ENCODE measurements at regions of chr1 and their contacts with region 1.

Region 1: DNA sequence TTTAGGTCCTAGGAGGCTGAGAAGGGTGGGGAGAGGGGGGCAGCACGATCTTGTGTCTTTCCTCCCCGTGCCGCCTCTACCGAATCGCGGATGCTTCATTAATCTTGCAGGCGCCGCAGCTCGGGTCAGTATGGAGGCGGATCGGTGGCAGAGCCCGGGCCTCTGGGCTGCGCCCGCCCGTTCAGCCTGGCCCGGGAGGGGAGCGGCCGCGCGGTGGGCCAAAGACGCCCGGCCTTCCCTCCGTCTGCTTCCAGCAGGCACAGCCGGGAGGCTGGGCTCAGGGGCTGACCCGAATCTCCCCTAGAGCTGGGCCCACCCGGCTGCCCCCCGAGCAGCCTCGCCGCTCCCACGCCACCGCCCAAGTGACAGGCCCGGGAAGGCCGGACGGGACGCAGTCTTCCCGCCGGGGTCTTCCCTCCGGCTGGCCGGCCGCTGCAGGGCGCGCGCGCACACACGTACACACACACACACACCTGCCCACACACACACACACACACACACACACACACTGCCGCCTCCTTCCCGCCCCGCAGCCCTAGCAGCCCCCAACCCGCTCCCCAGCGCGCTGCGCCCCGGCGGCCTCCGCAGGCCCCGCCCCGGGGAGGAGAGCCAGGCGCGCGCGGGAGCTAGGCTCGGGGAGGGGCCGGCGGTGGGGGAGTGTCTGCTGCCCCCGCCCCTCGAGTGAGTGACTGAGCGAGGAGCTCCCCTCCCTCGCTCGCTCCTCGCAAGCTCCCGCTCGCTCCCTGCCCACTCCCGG is at the start of gene C1orf21:
- DNase-seq: peak; percentile 91 to 92
- H3K4me3 ChIP-seq: peak within 1 kb of the TSS; percentile 75 to 92
- H3K27ac ChIP-seq: peak within 1 kb of the TSS; percentile 88 to 92
- H3K4me1 ChIP-seq: peaks cover 0 to 6% of the 10 kb centered on the region in 2 donors
- H3K27me3 ChIP-seq: no peaks in the 10 kb centered on the region
- CTCF ChIP-seq: no peak
- POLR2A ChIP-seq: peak in 1 of 2 donors; percentile 94
- total RNA-seq, gene C1orf21: 15.0 to 71.0 (median 44.5) TPM

Region 2: GRCh38 chr1:184483101-184483683 is 96.7 kb after region 1 on chr1:
- intact Hi-C with region 1: no loop called
- DNase-seq: peak; percentile 78
- H3K4me3 ChIP-seq: no peak overlapping the region
- H3K27ac ChIP-seq: peak overlapping the region; percentile 80 to 88
- H3K4me1 ChIP-seq: peaks cover 28 to 35% of the 10 kb centered on the region in 2 donors
- H3K27me3 ChIP-seq: no peaks in the 10 kb centered on the region
- CTCF ChIP-seq: peak in 2 of 4 experiments; percentile 17 to 31
- POLR2A ChIP-seq: no peak

Region 3: DNA sequence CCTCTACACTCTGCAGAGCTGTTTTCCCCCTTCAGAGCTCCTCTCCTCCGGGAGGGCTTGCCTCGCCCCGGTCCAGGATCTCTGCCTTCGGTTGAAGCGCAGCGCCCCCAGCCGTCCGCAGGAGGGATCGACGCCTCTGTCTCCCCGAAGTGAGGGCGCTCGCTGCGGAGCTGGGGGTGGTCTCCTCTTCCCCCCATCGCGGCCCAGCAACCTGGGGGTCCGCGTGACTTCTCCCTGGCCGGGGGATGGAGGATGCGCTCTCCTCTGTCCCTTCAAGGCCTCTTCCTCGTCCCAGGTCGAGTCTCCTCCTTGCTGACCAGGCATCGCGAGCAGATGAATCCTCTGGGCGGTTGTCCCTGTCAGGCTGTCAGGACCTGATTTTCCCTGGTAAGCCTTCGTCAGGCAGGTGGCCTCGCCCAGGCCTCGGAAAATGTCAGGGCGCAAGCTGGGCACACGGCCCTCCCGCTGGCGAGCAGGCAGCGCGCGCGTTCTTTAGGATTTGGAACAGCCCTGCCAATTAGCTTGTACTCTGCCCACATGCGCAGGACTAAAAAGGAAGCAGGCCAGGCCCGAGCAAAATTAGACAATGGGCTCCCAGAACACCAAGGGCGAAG is 277.7 kb after region 1 on chr1:
- intact Hi-C with region 1: loop called (anchors 10 kb)
- DNase-seq: peak; percentile 84
- H3K4me3 ChIP-seq: peak overlapping the region in 1 of 2 donors; percentile 22
- H3K27ac ChIP-seq: no peak overlapping the region
- H3K4me1 ChIP-seq: peaks cover 0 to 8% of the 10 kb centered on the region in 2 donors
- H3K27me3 ChIP-seq: no peaks in the 10 kb centered on the region
- CTCF ChIP-seq: peak; percentile 85 to 97 (median 93)
- POLR2A ChIP-seq: peak in 1 of 2 donors; percentile 7